ENCODE measurements at regions of chr2 and their contacts with region 1.

Region 1: DNA sequence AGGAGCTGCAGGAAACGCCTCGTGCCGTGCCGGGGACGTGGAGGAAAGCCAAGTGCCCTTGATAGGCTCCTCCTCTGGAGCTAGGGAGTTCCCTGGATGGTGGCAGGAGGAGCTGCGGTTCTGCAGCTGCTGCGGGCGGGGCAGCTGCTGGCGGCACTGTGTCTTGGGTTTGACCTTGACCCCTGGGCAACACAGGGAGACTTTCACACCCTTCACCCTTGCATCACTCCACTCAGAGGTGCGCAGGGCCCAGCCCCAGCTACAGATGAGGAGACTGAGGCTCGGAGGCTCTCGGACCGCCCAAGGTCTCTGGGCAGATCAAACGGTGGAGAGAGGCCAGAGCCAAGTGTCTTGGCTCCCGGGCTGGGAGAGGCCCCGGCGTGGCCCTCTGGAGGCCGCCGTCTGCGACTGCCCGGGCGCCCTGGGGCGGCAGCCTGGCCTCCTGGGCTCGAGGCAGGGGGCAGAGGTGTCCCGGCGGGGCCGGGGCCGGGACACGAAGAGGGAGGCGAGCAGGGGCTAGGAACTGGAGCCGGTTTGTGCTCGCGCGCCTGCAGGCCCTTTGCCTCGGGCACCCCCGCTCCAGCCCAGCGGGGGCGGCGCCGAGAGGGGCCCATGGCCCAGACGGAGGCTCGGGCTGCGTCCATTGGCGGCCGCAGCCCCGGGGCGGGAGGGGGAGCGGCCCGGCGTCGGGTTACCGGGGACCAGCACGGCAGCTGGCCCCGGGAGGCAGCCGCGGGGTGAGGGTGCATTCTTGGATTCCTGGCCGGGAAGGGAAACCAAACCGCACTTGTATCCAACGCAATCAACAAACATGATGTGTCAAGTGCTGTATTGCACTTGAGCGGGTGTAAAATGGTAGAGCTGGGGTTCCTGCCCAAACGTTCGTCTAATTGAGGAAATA is 129.6 kb upstream of the SLC1A4 start:
- DNase-seq: peak; percentile 93 to 95
- ATAC-seq: peak; percentile 74
- H3K4me3 ChIP-seq: peak overlapping the region in 1 of 2 donors; percentile 24
- H3K27ac ChIP-seq: peak overlapping the region; percentile 14 to 29
- H3K4me1 ChIP-seq: peaks cover 0 to 4% of the 10 kb centered on the region in 2 donors
- H3K27me3 ChIP-seq: no peaks in the 10 kb centered on the region

Region 2: DNA sequence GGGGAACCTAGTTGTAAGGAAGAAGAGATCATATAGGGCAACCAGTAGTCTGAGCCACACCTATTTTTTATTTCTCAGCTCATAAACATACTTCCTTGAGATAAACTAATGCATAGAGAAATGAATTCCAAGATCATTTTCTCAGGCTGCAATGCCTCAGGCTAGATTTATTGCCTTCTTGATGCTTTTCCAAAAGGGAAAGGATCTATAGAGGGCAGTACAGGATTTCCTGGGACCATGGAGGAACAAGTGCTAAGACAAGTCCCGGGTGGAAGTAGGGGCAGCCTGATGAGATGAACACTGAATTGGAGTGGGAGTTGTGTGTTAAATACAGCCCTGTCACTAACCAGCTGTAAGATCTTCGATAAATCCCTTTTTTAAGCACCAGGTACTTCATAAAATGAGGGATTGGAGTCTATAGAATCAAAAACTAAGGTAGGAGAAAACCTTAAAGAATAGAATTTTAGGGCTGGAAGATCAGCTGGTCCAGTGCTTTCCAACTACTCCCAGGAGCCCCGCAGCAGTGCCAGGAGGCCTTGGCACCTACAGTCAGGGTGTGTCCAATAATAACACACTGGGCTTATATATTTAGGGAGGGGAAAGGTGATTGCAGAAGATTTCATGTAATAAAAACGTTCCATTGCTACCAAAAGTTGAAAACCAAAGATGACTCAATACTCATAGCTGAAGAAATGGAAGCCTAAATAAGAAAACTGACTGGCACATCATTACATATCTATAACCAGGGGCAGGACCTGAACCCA is 264.0 kb before region 1 on chr2:
- intact Hi-C with region 1: loop called in 1 of 2 experiments (anchors 5 kb)
- DNase-seq: no peak
- ATAC-seq: no peak
- H3K4me3 ChIP-seq: no peak overlapping the region
- H3K27ac ChIP-seq: no peak overlapping the region
- H3K4me1 ChIP-seq: peaks cover 0 to 5% of the 10 kb centered on the region in 2 donors
- H3K27me3 ChIP-seq: no peaks in the 10 kb centered on the region

Region 3: DNA sequence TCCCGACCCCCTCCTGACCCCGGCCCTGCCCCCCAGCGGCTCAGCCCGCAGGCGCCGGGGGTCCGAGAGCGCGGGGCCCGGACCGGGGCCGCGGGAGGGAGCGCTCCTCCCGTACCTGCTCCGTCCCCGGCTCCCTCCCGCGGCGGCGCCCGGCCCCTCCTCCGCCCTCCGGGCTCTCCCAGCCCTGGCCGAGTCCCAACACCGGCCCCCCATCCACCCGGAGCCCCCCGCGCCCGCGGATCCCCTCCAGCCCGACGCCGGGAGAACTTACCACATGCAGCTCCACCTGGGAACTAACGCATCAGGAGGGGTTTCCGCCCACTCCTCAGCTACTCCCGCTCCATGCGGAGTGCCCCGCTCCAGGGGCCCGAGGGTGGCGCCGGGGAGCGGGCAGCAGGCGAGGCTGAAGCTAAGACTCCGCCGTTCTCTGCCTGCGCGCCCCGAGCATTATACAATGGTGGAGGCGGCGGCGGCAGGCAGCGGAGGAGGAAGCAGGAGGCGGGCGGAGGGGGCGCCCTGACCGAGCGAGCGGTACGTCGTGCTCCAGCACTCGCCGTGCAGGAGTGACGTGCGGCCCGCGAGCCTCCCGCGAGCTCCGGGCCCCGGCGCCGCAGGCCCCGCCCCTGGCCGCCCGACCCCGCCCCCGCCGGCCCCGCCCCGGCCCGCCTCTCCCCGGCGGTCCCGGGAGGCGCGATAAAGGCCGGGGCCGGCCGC is 206.1 kb before region 1 on chr2 and contains the start of gene SERTAD2:
- intact Hi-C with region 1: loop called in 1 of 2 experiments (anchors 2 kb)
- DNase-seq: peak; percentile 94 to 95
- ATAC-seq: peak; percentile 95
- H3K4me3 ChIP-seq: peak within 1 kb of the TSS; percentile 79 to 97
- H3K27ac ChIP-seq: peak within 1 kb of the TSS; percentile 95 to 97
- H3K4me1 ChIP-seq: no peaks in the 10 kb centered on the region
- H3K27me3 ChIP-seq: no peaks in the 10 kb centered on the region
- total RNA-seq, gene SERTAD2: 23.5 to 27.4 TPM

Region 4: DNA sequence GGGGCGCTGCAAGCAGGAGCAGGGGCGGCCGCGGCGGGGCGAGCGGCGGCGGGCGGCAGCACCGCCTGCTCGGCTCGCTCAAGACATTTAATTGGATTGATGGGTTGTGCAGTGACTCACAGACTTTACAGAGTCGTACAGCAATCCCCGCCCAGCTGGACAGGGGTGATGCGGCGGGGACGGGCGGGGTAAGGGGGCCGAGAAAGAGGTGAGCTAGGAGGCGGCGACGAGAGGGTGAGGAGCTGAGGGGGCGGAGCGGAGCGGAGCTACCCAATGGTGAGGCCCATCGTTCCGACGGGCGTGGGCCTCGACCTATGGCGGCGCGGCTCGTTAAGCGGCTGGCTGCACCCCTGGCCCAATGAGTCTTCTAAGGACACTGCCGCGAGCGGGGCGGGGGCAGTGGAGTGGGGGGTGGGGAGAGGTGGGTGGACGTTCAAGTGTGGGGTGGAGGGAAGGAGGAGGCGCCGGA is 108.7 kb before region 1 on chr2:
- intact Hi-C with region 1: loop called (anchors 1 to 5 kb)
- DNase-seq: peak; percentile 99 to 100
- ATAC-seq: peak; percentile 96
- H3K4me3 ChIP-seq: peak overlapping the region; percentile 60 to 87
- H3K27ac ChIP-seq: peak overlapping the region in 1 of 2 donors; percentile 94
- H3K4me1 ChIP-seq: no peaks in the 10 kb centered on the region
- H3K27me3 ChIP-seq: no peaks in the 10 kb centered on the region

Region 5: GRCh38 chr2:64767670-64768468 is 91.7 kb before region 1 on chr2:
- intact Hi-C with region 1: loop called in 1 of 2 experiments (anchors 1 kb)
- DNase-seq: peak; percentile 94 to 95
- ATAC-seq: peak; percentile 97
- H3K4me3 ChIP-seq: peak overlapping the region; percentile 50 to 95
- H3K27ac ChIP-seq: peak overlapping the region; percentile 87 to 93
- H3K4me1 ChIP-seq: no peaks in the 10 kb centered on the region
- H3K27me3 ChIP-seq: no peaks in the 10 kb centered on the region